Heart left ventricle (tissue), 16 donors: ENCODE measurements at regions of chr1 and their contacts with region 1.

Region 1: GRCh38 chr1:10796019-10796944 is at the start of gene CASZ1:
- DNase-seq: peak; percentile 83 to 90 (median 85)
- ATAC-seq: peak; percentile 39 to 71 (median 62)
- H3K4me3 ChIP-seq: peak within 1 kb of the TSS; percentile 50 to 95 (median 76)
- H3K27ac ChIP-seq: peak within 1 kb of the TSS; percentile 76 to 98 (median 92)
- H3K4me1 ChIP-seq: peaks cover 0 to 43% (median 11%) of the 10 kb centered on the region in 12 donors
- H3K27me3 ChIP-seq: peaks cover 0 to 59% (median 0%) of the 10 kb centered on the region in 9 donors
- CTCF ChIP-seq: no peak
- POLR2A ChIP-seq: peak in 1 of 2 donors; percentile 56
- total RNA-seq, gene CASZ1: 39.5 to 84.9 (median 63.2) TPM

Region 2: GRCh38 chr1:10530281-10530740 is 266.0 kb before region 1 on chr1:
- intact Hi-C with region 1: loop called in 3 of 10 experiments (anchors 5 to 10 kb)
- DNase-seq: peak in 4 of 5 donors; percentile 35 to 68 (median 38)
- ATAC-seq: peak in 3 of 4 donors; percentile 17 to 61 (median 35)
- H3K4me3 ChIP-seq: no peak overlapping the region
- H3K27ac ChIP-seq: peak overlapping the region in 3 of 12 donors; percentile 3 to 71 (median 66)
- H3K4me1 ChIP-seq: peaks cover 0 to 51% (median 31%) of the 10 kb centered on the region in 12 donors
- H3K27me3 ChIP-seq: no peaks in the 10 kb centered on the region
- CTCF ChIP-seq: peak; percentile 39 to 78 (median 68)
- POLR2A ChIP-seq: no peak

Region 3: DNA sequence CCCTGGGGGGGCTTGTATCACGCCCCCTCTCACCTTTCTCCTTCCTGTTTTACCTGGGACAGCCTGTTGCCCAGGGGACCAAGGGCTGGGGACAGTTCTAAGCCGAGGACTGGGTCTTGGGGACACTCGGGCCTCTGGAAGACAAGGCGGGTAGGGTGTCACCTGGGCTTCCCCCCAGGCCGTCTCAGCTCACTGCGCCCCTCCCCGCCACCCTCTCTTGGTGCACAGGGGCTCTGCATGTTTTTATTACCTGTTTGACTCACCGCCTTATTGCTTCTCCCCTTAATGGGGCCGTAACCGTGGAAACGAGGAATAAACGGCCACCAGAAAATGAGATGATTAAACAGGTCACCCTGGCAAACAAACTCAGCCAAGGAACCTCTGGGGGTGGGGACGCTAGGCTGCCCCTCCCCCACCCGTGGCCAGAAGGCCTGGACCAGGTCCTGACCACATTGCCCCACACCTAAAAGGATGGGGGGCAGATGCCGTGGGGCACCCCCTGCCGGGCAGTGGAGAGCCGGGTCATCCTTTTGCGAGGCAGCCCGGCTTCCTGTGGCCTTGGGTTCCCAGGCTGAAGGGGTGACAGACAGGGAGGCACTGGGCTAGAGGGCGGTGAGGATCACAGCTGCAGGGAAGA is 109.8 kb before region 1 on chr1:
- intact Hi-C with region 1: loop called in 5 of 10 experiments (anchors 5 to 10 kb)
- DNase-seq: no peak
- ATAC-seq: peak in 1 of 4 donors; percentile 7
- H3K4me3 ChIP-seq: no peak overlapping the region
- H3K27ac ChIP-seq: peak overlapping the region; percentile 66 to 94 (median 88)
- H3K4me1 ChIP-seq: peaks cover 38 to 99% (median 89%) of the 10 kb centered on the region in 12 donors
- H3K27me3 ChIP-seq: no peaks in the 10 kb centered on the region
- CTCF ChIP-seq: peak in 1 of 12 donors; percentile 13
- POLR2A ChIP-seq: no peak

Region 4: DNA sequence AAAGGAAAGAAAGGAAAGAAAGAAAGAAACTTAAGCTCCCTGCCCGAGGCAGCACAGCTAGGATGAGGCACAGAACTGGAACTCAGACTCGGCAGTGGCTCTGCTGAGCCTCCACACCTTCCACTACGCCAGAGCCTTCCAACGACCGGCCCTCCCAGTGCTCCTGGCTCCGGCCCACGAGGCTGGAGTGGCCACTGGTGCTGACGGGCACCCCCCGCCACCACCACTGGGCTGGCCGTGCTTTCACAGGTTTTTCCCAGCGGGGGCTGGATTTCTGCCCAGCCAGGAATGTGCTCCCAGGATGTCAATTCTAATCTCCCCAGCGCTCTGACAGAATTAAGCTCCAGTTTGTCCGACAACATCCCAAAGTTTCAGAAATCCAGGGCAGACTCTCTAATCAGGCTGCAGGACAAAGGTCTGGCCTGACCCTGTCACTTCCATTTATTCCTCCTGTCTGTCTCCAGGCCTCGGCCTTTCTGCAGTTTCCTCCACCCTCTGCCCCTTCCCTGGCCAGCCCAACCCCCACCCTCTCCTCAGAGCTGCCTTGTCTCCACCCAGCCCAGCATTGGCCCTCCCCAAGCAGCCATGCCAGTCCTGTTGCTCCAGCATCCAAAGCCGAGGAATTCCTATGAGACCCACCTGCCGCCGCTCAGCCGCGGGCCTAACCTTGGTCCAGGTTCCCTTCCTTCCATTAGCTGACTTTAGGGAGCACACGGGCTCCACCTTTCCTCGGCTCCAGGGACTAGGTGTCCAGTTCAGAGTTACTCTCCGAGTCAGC is 81.8 kb before region 1 on chr1:
- intact Hi-C with region 1: no loop called
- DNase-seq: peak in 4 of 5 donors; percentile 74 to 82 (median 78)
- ATAC-seq: peak; percentile 74 to 83 (median 81)
- H3K4me3 ChIP-seq: no peak overlapping the region
- H3K27ac ChIP-seq: peak overlapping the region in 11 of 12 donors; percentile 31 to 86 (median 71)
- H3K4me1 ChIP-seq: peaks cover 3 to 84% (median 48%) of the 10 kb centered on the region in 12 donors
- H3K27me3 ChIP-seq: peaks cover 0 to 8% (median 0%) of the 10 kb centered on the region in 9 donors
- CTCF ChIP-seq: no peak
- POLR2A ChIP-seq: no peak

Region 5: GRCh38 chr1:10755970-10756521 is 40.2 kb before region 1 on chr1:
- intact Hi-C with region 1: loop called in 1 of 10 experiments (anchors 5 kb)
- DNase-seq: peak; percentile 74 to 85 (median 82)
- ATAC-seq: peak; percentile 77 to 90 (median 82)
- H3K4me3 ChIP-seq: no peak overlapping the region
- H3K27ac ChIP-seq: peak overlapping the region; percentile 37 to 77 (median 69)
- H3K4me1 ChIP-seq: peaks cover 4 to 70% (median 41%) of the 10 kb centered on the region in 12 donors
- H3K27me3 ChIP-seq: no peaks in the 10 kb centered on the region
- CTCF ChIP-seq: peak in 1 of 12 donors; percentile 15
- POLR2A ChIP-seq: no peak

Region 6: GRCh38 chr1:10901086-10901890 is 105.0 kb after region 1 on chr1:
- intact Hi-C with region 1: no loop called
- DNase-seq: peak in 2 of 5 donors; percentile 23 to 32
- ATAC-seq: no peak
- H3K4me3 ChIP-seq: no peak overlapping the region
- H3K27ac ChIP-seq: no peak overlapping the region
- H3K4me1 ChIP-seq: peaks cover 0 to 7% (median 0%) of the 10 kb centered on the region in 12 donors
- H3K27me3 ChIP-seq: peaks cover 0 to 54% (median 6%) of the 10 kb centered on the region in 9 donors
- CTCF ChIP-seq: no peak
- POLR2A ChIP-seq: no peak